ENCODE measurements at regions of chr3 and their contacts with region 1.

Region 1: DNA sequence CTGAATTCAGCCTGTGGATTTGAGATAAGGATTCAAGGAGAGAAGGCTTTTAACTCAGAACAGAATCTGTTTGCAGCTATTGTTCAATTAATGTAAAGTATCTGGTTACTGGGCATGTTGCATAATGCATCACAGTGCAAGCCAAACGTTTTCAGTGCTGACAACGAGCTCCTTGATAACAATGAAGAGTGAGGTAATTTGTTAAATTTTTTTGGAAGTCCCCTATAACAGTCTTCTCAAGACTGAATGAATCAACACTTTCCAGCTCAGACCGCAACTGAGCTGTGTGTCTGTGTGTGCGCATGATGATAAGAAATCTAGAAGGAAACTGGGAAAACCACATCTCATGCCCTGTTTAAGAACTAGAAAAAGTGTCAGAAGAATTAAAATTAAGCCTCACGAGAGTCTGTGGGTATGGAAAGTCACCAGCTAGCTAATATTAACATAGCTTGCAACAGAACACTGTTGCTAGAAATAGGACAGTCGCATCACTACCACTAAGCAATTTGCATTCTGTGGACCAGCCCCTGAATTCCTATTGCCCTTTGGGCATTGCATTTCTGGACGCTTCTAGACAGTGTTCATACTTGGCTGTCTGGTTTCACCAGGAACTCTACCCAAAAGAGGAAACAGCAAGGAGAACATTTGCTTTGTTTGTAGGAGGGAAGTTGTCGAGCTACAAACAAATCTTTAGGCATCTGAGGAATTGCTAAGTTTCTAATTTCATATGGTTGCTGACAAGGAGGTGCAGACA is 43.7 kb upstream of the ATP2C1 start:
- DNase-seq: peak in 4 of 5 donors; percentile 28 to 39 (median 36)
- ATAC-seq: peak; percentile 85 to 93 (median 93)
- H3K4me3 ChIP-seq: peak overlapping the region; percentile 17 to 63 (median 51)
- H3K27ac ChIP-seq: peak overlapping the region; percentile 62 to 93 (median 76)
- H3K4me1 ChIP-seq: peaks cover 0 to 33% (median 14%) of the 10 kb centered on the region in 12 donors
- H3K27me3 ChIP-seq: no peaks in the 10 kb centered on the region
- CTCF ChIP-seq: no peak
- POLR2A ChIP-seq: peak in 1 of 2 donors; percentile 23

Region 2: GRCh38 chr3:130892759-130893375 is 42.6 kb after region 1 on chr3:
- intact Hi-C with region 1: loop called in 2 of 10 experiments (anchors 2 to 5 kb)
- DNase-seq: peak in 4 of 5 donors; percentile 50 to 70 (median 68)
- ATAC-seq: peak; percentile 63 to 81 (median 75)
- H3K4me3 ChIP-seq: peak overlapping the region; percentile 62 to 94 (median 85)
- H3K27ac ChIP-seq: peak overlapping the region; percentile 89 to 99 (median 96)
- H3K4me1 ChIP-seq: peaks cover 0 to 36% (median 26%) of the 10 kb centered on the region in 12 donors
- H3K27me3 ChIP-seq: no peaks in the 10 kb centered on the region
- CTCF ChIP-seq: peak; percentile 74 to 92 (median 84)
- POLR2A ChIP-seq: no peak

Measured in heart left ventricle (tissue), 16 donors.